Activated naive CD4-positive, alpha-beta T cell treated with anti-CD3 and anti-CD28 coated beads for 36 hours (primary cell): ENCODE measurements at regions of chr5 and their contacts with region 1.

Region 1: GRCh38 chr5:126776497-126777256 is at the start of gene LMNB1:
- DNase-seq: peak; percentile 97
- H3K4me3 Mint-ChIP-seq: peak within 1 kb of the TSS; percentile 96
- H3K27ac Mint-ChIP-seq: peak within 1 kb of the TSS; percentile 97
- H3K4me1 Mint-ChIP-seq: peaks cover 26% of the 10 kb centered on the region
- H3K27me3 Mint-ChIP-seq: no peaks in the 10 kb centered on the region
- total RNA-seq, gene LMNB1: 274 to 289 TPM

Region 2: DNA sequence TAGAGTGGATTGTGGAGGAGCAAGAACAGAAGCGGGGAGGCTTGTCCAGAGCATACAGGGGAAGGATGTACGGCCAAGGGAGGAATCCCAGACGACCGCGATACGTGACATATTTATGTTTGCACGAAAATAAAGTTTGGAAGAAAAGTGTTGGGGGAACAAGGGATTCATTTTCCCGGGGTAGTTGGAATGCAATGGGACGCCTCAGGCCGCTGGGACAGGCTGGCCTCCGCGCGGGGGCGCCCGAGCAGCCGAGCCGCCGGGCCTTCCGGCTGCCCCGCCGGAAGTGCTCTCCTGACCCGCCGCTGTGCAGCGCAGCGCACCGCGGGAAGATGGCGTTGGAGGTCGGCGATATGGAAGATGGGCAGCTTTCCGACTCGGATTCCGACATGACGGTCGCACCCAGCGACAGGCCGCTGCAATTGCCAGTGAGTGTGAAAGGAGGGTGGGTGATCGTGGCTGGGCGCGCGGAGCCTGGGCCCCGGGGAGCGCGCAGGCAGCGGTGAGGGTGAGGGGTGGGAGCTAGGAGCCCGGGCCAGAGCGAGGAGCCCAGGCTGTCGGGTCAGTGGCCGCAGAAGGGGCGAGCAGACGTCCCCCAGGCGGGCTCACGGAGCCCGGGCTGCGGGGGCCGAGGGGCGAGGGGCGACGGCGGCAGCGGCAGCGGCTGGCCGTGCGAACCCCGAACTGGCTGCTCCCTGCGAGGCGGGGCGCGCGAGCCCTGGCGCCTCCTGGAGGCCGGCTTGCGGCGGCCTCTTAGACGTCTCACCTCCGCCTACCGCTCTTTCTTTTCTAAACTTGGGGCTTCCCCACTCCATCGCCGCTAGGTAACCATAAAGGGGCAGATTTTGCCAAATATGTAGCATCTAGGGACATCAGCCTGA is 175.8 kb before region 1 on chr5 and contains the start of gene PHAX:
- CTCF ChIA-PET with region 1: no interaction called
- intact Hi-C with region 1: loop called (anchors 1 kb)
- DNase-seq: peak; percentile 78
- H3K4me3 Mint-ChIP-seq: peak within 1 kb of the TSS; percentile 90
- H3K27ac Mint-ChIP-seq: peak within 1 kb of the TSS; percentile 93
- H3K4me1 Mint-ChIP-seq: peaks cover 34% of the 10 kb centered on the region
- H3K27me3 Mint-ChIP-seq: no peaks in the 10 kb centered on the region
- total RNA-seq, gene PHAX: 34.9 to 37.2 TPM

Region 3: DNA sequence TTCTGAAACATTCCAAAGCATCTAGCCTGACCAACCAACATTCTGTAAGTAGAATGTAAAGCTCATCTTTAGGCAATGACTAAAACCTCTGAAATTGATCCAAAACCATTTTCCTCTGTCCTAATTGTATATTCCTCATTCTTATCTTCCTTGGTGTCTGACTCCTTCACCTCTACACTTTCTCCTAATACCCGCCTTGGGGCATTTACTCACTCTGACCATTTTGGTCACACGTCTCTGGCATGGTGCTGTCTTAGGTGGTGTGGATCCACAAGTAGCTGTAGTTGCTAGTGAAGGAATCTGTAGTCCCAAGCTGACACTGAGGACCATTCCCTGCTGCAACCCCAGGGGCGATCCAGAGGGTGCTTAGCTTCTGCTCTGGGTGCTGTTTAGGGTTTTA is 40.5 kb before region 1 on chr5:
- CTCF ChIA-PET with region 1: interaction called, 9 read pairs
- intact Hi-C with region 1: loop called (anchors 1 kb)
- DNase-seq: no peak
- H3K4me3 Mint-ChIP-seq: no peak overlapping the region
- H3K27ac Mint-ChIP-seq: no peak overlapping the region
- H3K4me1 Mint-ChIP-seq: peaks cover 4% of the 10 kb centered on the region
- H3K27me3 Mint-ChIP-seq: peaks cover 3% of the 10 kb centered on the region

Region 4: GRCh38 chr5:126808521-126808988 is 31.9 kb after region 1 on chr5:
- CTCF ChIA-PET with region 1: interaction called, 48 read pairs
- intact Hi-C with region 1: loop called (anchors 1 kb)
- DNase-seq: no peak
- H3K4me3 Mint-ChIP-seq: no peak overlapping the region
- H3K27ac Mint-ChIP-seq: peak overlapping the region; percentile 98
- H3K4me1 Mint-ChIP-seq: peaks cover 60% of the 10 kb centered on the region
- H3K27me3 Mint-ChIP-seq: no peaks in the 10 kb centered on the region

Region 5: DNA sequence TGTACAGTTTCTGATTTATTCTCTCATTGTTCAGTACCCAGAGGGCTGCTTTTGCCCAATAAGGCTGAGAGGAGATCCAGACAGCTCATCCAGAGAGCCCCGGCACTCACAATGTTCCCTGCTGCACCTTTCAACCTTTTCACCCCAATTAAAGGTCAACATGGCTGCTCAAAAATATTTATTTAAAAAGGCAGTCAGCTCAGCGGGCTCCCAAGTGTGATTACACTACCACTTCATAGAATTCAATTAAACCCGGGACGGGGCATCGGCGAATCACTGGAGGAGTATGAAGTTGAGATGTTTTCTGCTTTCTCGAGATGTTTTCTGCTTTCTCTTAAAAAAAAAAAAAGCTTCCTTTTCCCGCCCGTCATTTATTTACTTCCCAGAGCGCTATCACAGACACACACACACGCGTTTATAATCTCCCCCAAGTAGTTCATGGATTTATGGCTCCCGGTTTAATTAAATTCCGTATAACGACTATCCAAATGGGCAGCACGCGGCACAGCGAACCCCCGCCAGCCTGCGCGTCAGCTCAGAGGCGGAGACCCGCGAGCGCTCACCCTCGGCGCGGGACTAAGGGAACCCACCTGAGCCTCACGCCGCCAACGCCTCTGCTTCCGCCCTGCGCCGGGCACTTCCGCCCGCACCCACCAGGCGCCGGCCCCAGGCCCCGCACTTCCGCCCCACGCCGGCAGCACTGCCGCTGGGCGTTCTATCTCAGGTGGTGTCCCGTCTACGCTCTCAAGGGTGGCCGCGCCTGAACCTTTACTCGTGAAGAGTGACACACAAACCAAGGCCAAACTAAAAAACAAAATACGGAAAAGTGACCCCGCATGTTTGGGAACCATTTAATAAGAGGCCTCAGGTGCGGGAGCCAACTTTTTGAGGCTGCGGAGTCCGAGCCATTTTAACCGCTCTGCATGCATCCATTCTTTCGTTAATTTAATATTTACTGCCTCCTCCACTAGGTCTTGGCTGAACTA is 296.5 kb after region 1 on chr5 and contains the start of gene C5orf63:
- CTCF ChIA-PET with region 1: no interaction called
- intact Hi-C with region 1: loop called (anchors 1 kb)
- DNase-seq: peak; percentile 82
- H3K4me3 Mint-ChIP-seq: peak within 1 kb of the TSS; percentile 92
- H3K27ac Mint-ChIP-seq: peak within 1 kb of the TSS; percentile 90
- H3K4me1 Mint-ChIP-seq: peaks cover 21% of the 10 kb centered on the region
- H3K27me3 Mint-ChIP-seq: no peaks in the 10 kb centered on the region
- total RNA-seq, gene C5orf63: 9.4 to 11.6 TPM